Posterior cingulate gyrus (tissue), 11 donors: ENCODE measurements at regions of chr3 and their contacts with region 1.

Region 1: GRCh38 chr3:94069194-94069813 is 6.4 kb downstream of the NSUN3 start:
- DNase-seq: no peak

Region 2: DNA sequence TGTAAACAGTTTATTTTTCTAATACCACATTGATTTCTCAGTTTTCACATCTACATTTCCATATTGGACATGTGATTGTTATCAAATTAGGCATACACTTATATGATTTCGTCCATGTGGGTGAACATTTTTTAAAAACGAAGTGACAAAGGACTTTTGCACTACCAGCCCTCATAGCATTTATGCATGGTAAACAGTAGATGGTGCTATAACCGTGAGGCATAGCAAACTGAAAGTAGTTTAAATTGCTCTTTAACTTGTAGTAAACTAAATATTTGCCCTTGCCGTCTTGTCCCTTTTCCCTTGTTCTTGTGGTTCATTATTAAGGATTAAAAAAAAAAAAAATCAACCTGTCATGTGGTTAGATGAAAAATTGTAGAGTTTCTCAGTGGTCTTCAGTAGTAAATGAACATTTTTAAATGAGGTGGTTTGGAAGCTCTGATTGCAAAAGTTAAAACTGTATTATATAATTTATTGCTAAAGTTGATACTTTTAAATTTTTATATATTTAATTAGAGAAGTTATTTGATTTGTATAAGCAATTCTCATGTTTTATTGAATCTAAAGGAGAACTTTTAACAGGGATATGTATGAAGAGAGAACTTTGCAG is 64.9 kb before region 1 on chr3:
- intact Hi-C with region 1: loop called (anchors 2 kb)
- DNase-seq: no peak

Region 3: GRCh38 chr3:94162700-94163099 is 93.4 kb after region 1 on chr3:
- intact Hi-C with region 1: no loop called
- DNase-seq: no peak